ENCODE measurements at regions of chr15 and their contacts with region 1.

Region 1: DNA sequence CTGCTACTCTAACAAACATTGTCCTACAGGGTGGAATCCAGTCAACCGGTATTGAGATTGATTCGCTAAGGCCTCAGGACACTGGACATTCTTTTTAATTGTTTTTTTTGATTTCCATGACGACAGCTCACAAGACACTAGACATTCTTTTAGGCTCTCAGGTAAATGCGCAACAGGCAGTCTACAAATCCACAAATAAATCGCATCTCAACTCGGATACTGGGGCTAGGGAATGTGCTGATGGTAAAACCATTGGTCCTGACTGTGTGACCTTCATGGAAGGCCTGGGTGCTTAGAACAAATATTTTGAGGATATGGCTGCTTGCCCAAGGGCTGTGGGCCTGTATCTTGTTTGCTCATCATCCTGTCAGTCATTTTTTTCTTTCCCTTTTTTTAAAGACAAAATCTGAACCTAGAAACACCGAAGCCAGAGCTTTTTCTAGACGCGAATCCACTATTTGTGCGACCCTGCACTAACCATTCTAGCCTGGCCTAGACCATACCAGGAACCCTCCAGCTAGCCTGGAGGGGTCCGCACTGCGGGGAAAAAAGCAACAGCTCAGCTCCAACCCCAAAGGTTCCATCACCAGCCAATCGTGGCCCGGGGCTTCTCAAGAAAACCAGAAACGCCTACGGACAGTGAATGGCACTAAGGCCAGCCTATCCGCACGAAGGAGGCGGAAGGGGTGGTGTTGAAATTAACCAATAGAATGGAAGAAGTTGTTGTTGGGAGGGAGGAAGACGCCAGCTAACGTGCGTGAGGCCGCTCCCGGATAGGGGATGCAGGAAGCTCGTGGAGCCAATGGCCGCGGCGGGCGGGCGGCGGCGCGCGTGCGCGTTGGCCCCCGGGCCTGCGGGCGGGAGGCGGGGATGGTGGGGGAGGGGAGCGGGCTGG is 18.1 kb upstream of the CHD2 start:
- DNase-seq: peak; percentile 98 to 99
- ATAC-seq: peak; percentile 95 to 98 (median 96)
- H3K4me3 ChIP-seq: peak overlapping the region in 9 of 10 donors; percentile 30 to 95 (median 88)
- H3K27ac ChIP-seq: peak overlapping the region; percentile 53 to 100 (median 98)
- H3K4me1 ChIP-seq: peaks cover 8 to 54% (median 42%) of the 10 kb centered on the region in 9 donors
- H3K27me3 ChIP-seq: no peaks in the 10 kb centered on the region
- CTCF ChIP-seq: no peak

Region 2: GRCh38 chr15:92831655-92832328 is 50.3 kb before region 1 on chr15:
- intact Hi-C with region 1: loop called in 8 of 10 experiments (anchors 1 to 5 kb)
- DNase-seq: peak; percentile 91 to 96
- ATAC-seq: peak; percentile 96 to 99 (median 98)
- H3K4me3 ChIP-seq: peak overlapping the region in 9 of 10 donors; percentile 1 to 51 (median 36)
- H3K27ac ChIP-seq: peak overlapping the region; percentile 81 to 97 (median 92)
- H3K4me1 ChIP-seq: peaks cover 14 to 50% (median 40%) of the 10 kb centered on the region in 9 donors
- H3K27me3 ChIP-seq: no peaks in the 10 kb centered on the region
- CTCF ChIP-seq: peak in 1 of 9 donors; percentile 10

Region 3: DNA sequence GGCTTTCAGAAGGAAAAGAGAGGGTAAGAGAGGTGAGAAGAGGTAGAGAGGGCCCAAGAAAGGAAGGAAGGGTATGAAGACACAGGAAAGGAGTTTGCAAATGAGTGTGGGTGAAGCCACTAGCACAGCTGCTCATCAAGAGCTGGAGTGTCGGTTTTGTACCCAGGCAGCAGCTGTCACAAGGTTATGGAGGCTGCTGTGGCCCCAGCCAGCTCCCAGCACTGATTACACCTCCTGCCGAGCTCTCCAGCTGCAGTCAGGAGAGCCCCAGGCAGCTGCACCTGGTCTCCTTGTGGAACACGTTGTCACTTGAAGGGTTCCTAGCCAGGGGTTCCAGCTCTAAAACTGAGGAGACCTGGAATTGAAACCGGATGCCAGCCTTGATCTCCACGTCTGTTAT is 42.4 kb before region 1 on chr15:
- intact Hi-C with region 1: loop called in 2 of 10 experiments (anchors 5 kb)
- DNase-seq: no peak
- ATAC-seq: no peak
- H3K4me3 ChIP-seq: no peak overlapping the region
- H3K27ac ChIP-seq: peak overlapping the region in 1 of 10 donors; percentile 72
- H3K4me1 ChIP-seq: peaks cover 0 to 20% (median 0%) of the 10 kb centered on the region in 9 donors
- H3K27me3 ChIP-seq: no peaks in the 10 kb centered on the region
- CTCF ChIP-seq: no peak

Region 4: DNA sequence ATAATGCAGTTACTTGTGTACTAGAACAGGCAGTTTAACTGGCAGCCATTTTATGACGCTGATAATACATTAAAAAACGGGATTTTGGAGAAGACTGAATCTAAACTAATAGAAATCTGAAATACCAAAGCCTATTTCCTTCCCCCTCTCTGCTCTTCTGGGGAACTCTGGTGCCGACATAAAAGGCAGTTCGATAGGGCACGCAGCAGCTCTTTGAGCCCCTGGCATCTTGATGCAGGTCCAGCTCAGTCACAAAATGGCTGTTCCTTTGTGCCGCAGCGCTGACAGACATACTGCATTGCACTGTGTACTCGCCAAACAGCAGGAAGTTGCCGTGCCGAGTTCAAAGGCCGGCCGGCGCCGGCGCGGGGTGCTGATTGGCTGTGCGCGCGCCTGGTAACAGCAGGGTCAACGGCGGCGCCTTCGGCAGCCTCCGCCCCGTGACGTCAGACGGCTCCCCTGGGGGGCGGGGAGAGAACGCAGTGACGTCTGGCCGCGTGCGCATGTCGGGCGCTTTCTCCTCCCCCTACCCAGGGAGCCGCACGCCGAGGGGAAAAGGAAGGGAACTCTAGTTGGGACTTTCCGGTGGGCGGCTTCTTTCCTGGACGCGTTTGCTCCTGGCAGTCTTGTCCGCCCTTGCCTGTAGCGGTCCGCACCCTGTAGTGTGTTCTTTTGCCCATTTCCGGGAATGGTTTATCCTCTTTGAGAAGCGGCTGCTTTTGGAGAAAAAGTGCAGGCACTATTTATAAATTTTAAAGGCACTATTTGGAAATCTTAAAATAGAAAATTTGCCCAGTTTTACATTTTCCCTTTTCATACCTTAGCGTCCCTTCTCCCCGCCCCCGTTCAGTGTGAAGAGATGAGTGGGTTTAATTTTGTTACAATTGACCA is 22.1 kb after region 1 on chr15:
- intact Hi-C with region 1: loop called in 5 of 10 experiments (anchors 1 to 2 kb)
- DNase-seq: peak; percentile 98 to 99
- ATAC-seq: peak; percentile 93 to 98 (median 95)
- H3K4me3 ChIP-seq: peak overlapping the region; percentile 16 to 70 (median 60)
- H3K27ac ChIP-seq: peak overlapping the region; percentile 87 to 99 (median 95)
- H3K4me1 ChIP-seq: peaks cover 12 to 69% (median 60%) of the 10 kb centered on the region in 9 donors
- H3K27me3 ChIP-seq: no peaks in the 10 kb centered on the region
- CTCF ChIP-seq: no peak

Region 5: GRCh38 chr15:92917606-92918407 is 35.8 kb after region 1 on chr15:
- intact Hi-C with region 1: loop called in 3 of 10 experiments (anchors 5 kb)
- DNase-seq: peak; percentile 86 to 97
- ATAC-seq: peak; percentile 55 to 85 (median 80)
- H3K4me3 ChIP-seq: peak overlapping the region in 6 of 10 donors; percentile 7 to 31 (median 22)
- H3K27ac ChIP-seq: peak overlapping the region; percentile 30 to 95 (median 80)
- H3K4me1 ChIP-seq: peaks cover 4 to 100% (median 94%) of the 10 kb centered on the region in 9 donors
- H3K27me3 ChIP-seq: no peaks in the 10 kb centered on the region
- CTCF ChIP-seq: peak; percentile 88 to 95 (median 90)